ENCODE measurements at regions of chr14 and their contacts with region 1.

Region 1: DNA sequence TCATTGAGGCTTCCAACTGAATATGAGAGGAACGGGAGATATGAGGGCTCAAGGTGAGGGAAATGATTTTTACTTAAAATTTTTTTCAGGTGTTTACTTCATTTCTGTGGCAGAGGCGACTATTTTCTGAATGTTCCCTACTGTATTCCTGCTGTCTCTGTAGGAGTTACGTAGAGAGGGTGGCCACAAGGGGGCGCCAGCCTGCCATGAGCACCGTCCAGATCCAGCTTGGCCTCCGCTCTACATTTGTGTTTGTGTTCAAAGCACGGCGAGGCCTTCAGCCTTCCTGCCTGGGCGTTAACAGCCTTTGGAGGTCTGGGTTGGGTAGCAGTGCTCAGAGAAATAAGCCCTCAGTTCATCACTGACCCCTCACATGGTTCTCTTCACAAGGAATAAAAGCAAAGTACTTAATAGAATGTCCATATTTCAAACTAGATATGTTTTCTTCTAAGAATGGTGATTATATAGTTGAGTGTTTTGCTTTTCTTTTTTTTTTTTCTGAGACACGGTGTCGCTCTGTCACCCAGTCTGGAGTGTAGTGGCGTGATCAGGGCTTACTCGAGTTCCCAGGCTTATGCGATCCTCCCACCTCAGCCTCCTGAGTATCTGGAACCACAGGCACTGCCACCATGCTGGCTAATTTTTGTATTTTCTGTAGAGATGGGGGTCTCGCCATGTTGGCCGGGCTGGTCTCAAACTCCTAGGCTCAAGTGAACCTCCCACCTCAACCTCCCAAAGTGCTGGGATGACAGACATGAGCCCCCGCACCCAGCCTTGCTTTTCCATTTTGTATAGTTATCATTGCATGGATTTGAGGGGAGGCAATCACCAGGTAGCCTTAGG is 22.3 kb downstream of the CKB start:
- DNase-seq: peak; percentile 80
- H3K4me3 Mint-ChIP-seq: no peak overlapping the region
- H3K27ac Mint-ChIP-seq: no peak overlapping the region
- H3K4me1 Mint-ChIP-seq: peaks cover 7% of the 10 kb centered on the region
- H3K27me3 Mint-ChIP-seq: no peaks in the 10 kb centered on the region

Region 2: GRCh38 chr14:103488071-103488470 is 12.3 kb before region 1 on chr14:
- CTCF ChIA-PET with region 1: interaction called, 11 read pairs
- POLR2A ChIA-PET with region 1: no interaction called
- DNase-seq: no peak
- H3K4me3 Mint-ChIP-seq: no peak overlapping the region
- H3K27ac Mint-ChIP-seq: no peak overlapping the region
- H3K4me1 Mint-ChIP-seq: no peaks in the 10 kb centered on the region
- H3K27me3 Mint-ChIP-seq: no peaks in the 10 kb centered on the region

Measured in activated CD4-positive, alpha-beta memory T cell treated with anti-CD3 and anti-CD28 coated beads, Interleukin-2, amount 10 ng/mL, durations not matched to agents 7 days and 5 days (primary cell).